PC-3 (cell line): ENCODE measurements at regions of chr12 and their contacts with region 1.

Region 1: GRCh38 chr12:6215932-6216494 is 15.8 kb downstream of the CD9 start:
- DNase-seq: peak; percentile 96
- ATAC-seq: peak; percentile 89
- H3K4me3 ChIP-seq: peak overlapping the region; percentile 30; the same call in 1 of the 2 replicates
- H3K27ac ChIP-seq: peak overlapping the region; percentile 99
- H3K4me1 ChIP-seq: peaks cover 72% of the 10 kb centered on the region
- H3K27me3 ChIP-seq: no peaks in the 10 kb centered on the region
- CTCF ChIP-seq: no peak

Region 2: DNA sequence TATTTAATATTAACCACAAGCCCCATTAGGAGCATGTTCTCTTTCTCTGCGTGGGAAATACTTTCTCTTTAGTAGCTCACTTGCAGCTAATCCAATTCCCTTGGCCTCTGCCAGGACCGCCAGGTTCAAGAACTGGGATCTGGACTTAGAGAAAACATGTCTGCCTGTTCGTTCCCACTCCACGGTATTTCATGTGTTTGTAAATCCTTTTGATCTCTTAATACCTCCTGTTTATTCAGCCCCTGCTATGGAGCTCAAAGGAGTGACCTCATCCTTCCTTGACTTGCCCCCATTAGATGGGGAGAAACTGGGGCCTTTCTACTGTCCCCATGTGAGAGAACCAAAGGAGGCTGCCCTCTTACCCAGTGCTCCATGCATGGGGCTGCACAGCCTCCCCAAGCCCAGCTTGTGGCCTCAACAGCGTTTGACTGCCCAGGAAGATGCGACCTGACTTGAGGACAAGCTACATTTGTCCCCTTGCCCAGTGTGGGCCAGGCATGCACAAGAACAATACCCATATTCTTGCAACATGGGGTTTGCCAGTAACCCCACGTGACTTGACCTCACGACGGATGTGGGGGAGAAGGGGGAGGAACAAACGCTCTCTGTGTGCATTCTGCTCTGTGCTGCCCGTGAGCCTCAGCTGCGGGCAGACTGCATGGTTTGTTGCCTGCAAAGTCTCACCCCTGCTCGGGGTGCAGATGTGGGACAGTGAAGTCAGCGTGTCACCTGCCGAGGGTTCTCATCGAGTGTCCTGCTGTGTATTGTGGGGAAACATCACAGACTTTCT is 14.5 kb after region 1 on chr12:
- CTCF ChIA-PET with region 1: no interaction called
- POLR2A ChIA-PET with region 1: interaction called, 4 read pairs
- intact Hi-C with region 1: loop called (anchors 1 kb)
- DNase-seq: peak; percentile 47
- ATAC-seq: no peak; the same call in 1 of the 2 replicates
- H3K4me3 ChIP-seq: peak overlapping the region; percentile 52; the same call in 1 of the 2 replicates
- H3K27ac ChIP-seq: peak overlapping the region; percentile 99
- H3K4me1 ChIP-seq: peaks cover 65% of the 10 kb centered on the region
- H3K27me3 ChIP-seq: no peaks in the 10 kb centered on the region
- CTCF ChIP-seq: no peak

Region 3: DNA sequence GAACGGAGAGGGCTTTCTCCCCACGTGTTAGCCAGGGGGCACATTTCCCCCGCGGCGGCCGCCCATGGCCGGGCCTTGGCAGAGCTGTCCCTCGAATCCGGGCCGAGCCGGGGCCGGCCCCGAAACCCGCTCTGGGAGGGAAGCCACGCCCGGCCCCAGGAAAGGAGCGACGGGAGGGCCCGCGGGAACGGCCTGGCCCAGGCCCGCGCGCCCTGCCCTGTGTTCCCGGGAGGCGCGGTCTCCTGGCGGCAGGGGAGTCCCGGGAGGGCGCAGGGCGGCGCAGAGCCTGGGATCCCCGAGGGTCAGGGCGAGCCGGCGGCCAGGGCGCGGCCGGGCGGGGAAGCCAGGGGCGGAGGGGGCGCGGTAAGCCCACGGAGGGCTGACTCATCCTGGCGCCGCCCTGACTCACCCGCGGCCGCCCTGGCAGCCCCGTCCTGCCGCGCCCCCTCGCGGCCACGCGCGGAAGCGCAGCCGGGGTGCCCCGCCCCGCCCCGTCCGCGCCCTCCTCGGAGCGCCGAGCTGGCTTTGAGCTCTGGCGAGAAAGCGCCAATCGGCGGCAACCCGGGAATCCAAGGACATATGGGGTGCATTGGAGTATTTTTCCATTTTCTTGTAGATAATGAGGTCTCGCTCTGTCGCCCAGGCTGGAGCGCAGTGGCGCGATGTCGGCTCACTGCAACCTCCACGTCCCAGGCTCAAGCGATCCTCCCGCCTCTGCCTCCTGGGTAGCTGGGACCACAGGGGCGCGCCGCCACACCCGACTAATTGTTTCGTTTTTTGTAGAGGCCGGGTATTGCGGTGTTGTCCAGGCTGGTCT is 62.6 kb after region 1 on chr12:
- CTCF ChIA-PET with region 1: interaction called, 6 read pairs
- POLR2A ChIA-PET with region 1: no interaction called
- intact Hi-C with region 1: loop called (anchors 1 kb)
- DNase-seq: peak; percentile 88
- ATAC-seq: peak; percentile 67
- H3K4me3 ChIP-seq: peak overlapping the region; percentile 69
- H3K27ac ChIP-seq: peak overlapping the region; percentile 100
- H3K4me1 ChIP-seq: peaks cover 61% of the 10 kb centered on the region
- H3K27me3 ChIP-seq: no peaks in the 10 kb centered on the region
- CTCF ChIP-seq: peak; percentile 53; the same call in 1 of the 2 replicates

Region 4: GRCh38 chr12:6807170-6807569 is 591.2 kb after region 1 on chr12:
- CTCF ChIA-PET with region 1: interaction called, 10 read pairs
- POLR2A ChIA-PET with region 1: no interaction called
- intact Hi-C with region 1: no loop called
- DNase-seq: peak; percentile 43
- ATAC-seq: peak; percentile 67; the same call in 1 of the 2 replicates
- H3K4me3 ChIP-seq: no peak overlapping the region
- H3K27ac ChIP-seq: no peak overlapping the region
- H3K4me1 ChIP-seq: no peaks in the 10 kb centered on the region
- H3K27me3 ChIP-seq: no peaks in the 10 kb centered on the region
- CTCF ChIP-seq: no peak